Caco-2 (cell line): ENCODE measurements at regions of chr12 and their contacts with region 1.

Region 1: GRCh38 chr12:47361389-47362021 is 281.7 kb upstream of the AMIGO2 start:
- DNase-seq: peak; percentile 25 to 38
- H3K4me3 ChIP-seq: no peak overlapping the region
- H3K4me3 Mint-ChIP-seq: no peak overlapping the region
- H3K27ac Mint-ChIP-seq: no peak overlapping the region
- H3K4me1 ChIP-seq: peaks cover 11% of the 10 kb centered on the region
- H3K4me1 Mint-ChIP-seq: peaks cover 15% of the 10 kb centered on the region
- H3K27me3 ChIP-seq: no peaks in the 10 kb centered on the region
- H3K27me3 Mint-ChIP-seq: no peaks in the 10 kb centered on the region
- CTCF ChIP-seq: no peak

Region 2: DNA sequence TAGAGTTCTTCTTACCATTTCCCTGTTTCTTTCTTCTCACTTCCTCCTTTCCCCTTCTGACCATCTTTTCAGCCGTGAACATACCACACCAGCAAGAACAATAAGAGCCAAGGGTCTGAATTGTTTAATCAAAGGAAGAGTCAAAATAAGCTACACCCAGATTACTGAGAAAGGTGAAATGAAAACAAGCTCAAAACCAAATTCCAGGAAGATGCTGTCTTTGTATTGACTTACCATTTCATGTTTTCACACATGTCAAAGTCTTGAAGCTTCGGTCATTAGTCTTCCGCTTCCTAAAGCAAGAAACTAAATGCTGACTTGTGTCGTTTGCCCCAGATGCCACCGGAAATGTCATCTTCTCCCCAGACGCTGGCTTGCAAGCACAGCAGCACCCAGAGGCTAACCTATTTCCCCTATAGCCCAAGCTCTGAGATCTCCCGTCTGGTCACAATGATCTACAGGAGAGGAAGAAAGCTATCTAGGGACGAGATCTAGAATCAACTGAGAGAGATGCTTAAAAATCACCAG is 145.3 kb before region 1 on chr12:
- CTCF ChIA-PET with region 1: no interaction called
- POLR2A ChIA-PET with region 1: interaction called, 16 read pairs
- intact Hi-C with region 1: no loop called
- DNase-seq: no peak
- H3K4me3 ChIP-seq: no peak overlapping the region
- H3K4me3 Mint-ChIP-seq: no peak overlapping the region
- H3K27ac Mint-ChIP-seq: no peak overlapping the region
- H3K4me1 ChIP-seq: peaks cover 20% of the 10 kb centered on the region
- H3K4me1 Mint-ChIP-seq: peaks cover 14% of the 10 kb centered on the region
- H3K27me3 ChIP-seq: no peaks in the 10 kb centered on the region
- H3K27me3 Mint-ChIP-seq: no peaks in the 10 kb centered on the region
- CTCF ChIP-seq: no peak

Region 3: DNA sequence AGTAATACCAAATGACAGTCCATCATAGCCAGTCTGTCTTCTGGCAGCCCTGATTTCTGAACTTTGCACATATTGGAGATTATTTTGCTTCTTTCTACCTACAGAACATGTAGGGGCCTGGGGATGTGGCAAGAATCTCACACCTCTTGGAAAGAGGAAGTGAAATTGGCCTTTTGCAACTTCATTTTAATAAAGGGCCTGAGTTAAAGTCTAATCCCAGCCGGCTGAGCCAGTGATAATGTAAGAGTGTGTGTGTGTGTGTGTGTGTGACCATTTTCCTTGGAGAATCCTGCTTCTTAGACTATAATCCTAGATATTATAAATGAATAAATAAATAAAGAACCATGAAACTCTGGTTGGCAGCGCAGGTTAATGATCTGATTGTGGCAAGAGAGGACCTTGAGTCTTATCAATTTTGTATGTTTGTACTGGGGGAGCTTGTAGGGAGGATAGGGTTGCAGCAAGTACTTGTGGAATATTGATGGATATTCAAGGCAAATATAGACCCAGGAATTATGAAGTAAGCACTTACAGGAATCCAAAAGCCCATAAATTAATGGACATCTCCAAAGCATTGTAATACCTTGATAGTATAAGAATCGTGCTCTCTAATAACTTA is 48.6 kb before region 1 on chr12:
- CTCF ChIA-PET with region 1: no interaction called
- POLR2A ChIA-PET with region 1: no interaction called
- intact Hi-C with region 1: loop called (anchors 5 kb)
- DNase-seq: no peak
- H3K4me3 ChIP-seq: no peak overlapping the region
- H3K4me3 Mint-ChIP-seq: no peak overlapping the region
- H3K27ac Mint-ChIP-seq: no peak overlapping the region
- H3K4me1 ChIP-seq: 0 out of 2 replicates have a peak, but pooled peaks cover 4% of the 10 kb centered on the region
- H3K4me1 Mint-ChIP-seq: peaks cover 3% of the 10 kb centered on the region
- H3K27me3 ChIP-seq: no peaks in the 10 kb centered on the region
- H3K27me3 Mint-ChIP-seq: no peaks in the 10 kb centered on the region
- CTCF ChIP-seq: no peak

Region 4: DNA sequence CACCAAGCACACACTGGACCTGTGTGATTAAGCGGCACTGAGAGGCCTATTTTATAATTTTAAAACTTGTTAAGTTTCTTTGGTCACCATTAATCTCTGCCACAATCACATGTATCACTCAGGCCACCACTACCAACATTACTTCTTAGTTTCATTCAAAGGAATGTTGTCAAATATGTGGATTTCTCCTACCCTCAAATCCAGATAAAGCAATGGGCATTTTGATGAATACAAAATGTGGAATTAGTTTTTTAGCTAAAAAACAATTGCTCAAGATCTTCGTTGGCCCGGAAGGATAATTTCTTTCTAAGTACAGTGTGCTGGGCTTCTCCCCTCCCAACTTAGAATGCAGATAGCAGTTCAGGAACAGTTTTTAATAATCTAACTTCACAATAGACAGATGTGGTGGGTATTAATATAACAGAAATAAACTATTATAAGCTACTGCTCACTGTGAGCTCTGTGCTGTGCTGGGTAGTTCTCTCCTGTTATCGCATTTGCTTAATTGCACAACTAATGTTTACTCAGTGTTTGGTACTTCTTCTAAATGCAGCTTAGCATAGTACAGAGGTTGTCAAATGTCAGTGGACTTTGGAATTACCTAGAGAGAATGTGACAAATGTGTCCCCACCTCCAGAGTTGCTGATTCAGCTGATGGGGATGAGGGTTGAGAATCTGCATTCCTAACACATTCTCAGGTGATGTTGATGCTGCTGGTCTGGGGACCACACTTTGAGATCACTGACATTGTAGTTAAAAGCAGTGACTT is 15.1 kb before region 1 on chr12:
- CTCF ChIA-PET with region 1: no interaction called
- POLR2A ChIA-PET with region 1: no interaction called
- intact Hi-C with region 1: loop called (anchors 2 kb)
- DNase-seq: peak; percentile 84 to 87
- H3K4me3 ChIP-seq: no peak overlapping the region
- H3K4me3 Mint-ChIP-seq: no peak overlapping the region
- H3K27ac Mint-ChIP-seq: peak overlapping the region; percentile 42
- H3K4me1 ChIP-seq: peaks cover 12% of the 10 kb centered on the region
- H3K4me1 Mint-ChIP-seq: peaks cover 9% of the 10 kb centered on the region
- H3K27me3 ChIP-seq: no peaks in the 10 kb centered on the region
- H3K27me3 Mint-ChIP-seq: no peaks in the 10 kb centered on the region
- CTCF ChIP-seq: no peak

Region 5: GRCh38 chr12:47504775-47505446 is 143.4 kb after region 1 on chr12:
- CTCF ChIA-PET with region 1: no interaction called
- POLR2A ChIA-PET with region 1: no interaction called
- intact Hi-C with region 1: no loop called
- DNase-seq: no peak
- H3K4me3 ChIP-seq: no peak overlapping the region
- H3K4me3 Mint-ChIP-seq: no peak overlapping the region
- H3K27ac Mint-ChIP-seq: no peak overlapping the region
- H3K4me1 ChIP-seq: no peaks in the 10 kb centered on the region
- H3K4me1 Mint-ChIP-seq: no peaks in the 10 kb centered on the region
- H3K27me3 ChIP-seq: no peaks in the 10 kb centered on the region; the same call in none of the 2 replicates
- H3K27me3 Mint-ChIP-seq: peaks cover 12% of the 10 kb centered on the region
- CTCF ChIP-seq: no peak

Region 6: DNA sequence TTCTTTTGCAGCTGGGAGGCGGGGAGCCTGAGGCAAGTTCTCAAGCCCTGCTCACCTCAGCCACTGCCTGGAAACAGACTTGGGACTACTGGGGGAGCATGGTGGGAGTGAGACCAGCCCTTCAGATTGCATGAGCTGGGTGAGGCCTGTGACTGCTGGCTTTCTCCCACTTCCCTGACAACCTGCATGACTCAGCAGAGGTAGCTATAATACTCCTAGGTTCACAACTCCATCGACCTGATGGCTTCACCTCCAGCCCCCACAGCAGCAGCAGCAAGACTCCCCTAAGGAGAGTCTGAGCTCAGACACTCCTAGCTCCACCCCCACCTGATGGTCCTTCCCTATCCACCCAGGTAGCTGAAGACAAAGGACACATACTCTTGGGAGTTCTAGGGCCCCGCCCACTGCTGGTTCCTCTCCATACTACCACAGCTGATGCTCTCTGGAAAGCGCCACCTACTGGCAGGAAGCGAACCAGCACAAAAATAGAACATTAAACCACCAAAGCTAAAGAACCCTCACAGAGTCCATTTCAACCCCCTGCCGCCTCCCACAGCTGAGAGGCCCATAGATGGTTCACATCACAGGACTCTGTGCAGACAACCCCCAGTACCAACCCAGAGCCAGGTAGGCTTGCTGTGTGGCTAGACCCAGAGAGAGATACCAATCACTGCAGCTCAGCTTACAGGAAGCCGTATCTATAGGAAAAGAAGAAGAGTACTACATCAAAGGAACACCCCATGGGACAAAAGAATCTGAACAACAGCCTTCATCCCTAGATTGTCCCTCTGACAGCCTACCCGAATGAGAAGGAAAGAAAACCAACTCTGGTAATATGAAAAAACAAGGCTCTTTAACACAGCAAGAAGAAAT is 275.6 kb after region 1 on chr12:
- CTCF ChIA-PET with region 1: no interaction called
- POLR2A ChIA-PET with region 1: no interaction called
- intact Hi-C with region 1: no loop called
- DNase-seq: peak; percentile 66 to 75
- H3K4me3 ChIP-seq: no peak overlapping the region
- H3K4me3 Mint-ChIP-seq: no peak overlapping the region
- H3K27ac Mint-ChIP-seq: no peak overlapping the region
- H3K4me1 ChIP-seq: no peaks in the 10 kb centered on the region
- H3K4me1 Mint-ChIP-seq: no peaks in the 10 kb centered on the region
- H3K27me3 ChIP-seq: no peaks in the 10 kb centered on the region
- H3K27me3 Mint-ChIP-seq: no peaks in the 10 kb centered on the region
- CTCF ChIP-seq: peak; percentile 54 to 68